Right ventricle myocardium inferior (tissue), 1 donor: ENCODE measurements at regions of chr3 and their contacts with region 1.

Region 1: GRCh38 chr3:64612082-64612860 is 75.5 kb downstream of the ADAMTS9 start:
- DNase-seq: no peak
- ATAC-seq: peak; percentile 97

Region 2: DNA sequence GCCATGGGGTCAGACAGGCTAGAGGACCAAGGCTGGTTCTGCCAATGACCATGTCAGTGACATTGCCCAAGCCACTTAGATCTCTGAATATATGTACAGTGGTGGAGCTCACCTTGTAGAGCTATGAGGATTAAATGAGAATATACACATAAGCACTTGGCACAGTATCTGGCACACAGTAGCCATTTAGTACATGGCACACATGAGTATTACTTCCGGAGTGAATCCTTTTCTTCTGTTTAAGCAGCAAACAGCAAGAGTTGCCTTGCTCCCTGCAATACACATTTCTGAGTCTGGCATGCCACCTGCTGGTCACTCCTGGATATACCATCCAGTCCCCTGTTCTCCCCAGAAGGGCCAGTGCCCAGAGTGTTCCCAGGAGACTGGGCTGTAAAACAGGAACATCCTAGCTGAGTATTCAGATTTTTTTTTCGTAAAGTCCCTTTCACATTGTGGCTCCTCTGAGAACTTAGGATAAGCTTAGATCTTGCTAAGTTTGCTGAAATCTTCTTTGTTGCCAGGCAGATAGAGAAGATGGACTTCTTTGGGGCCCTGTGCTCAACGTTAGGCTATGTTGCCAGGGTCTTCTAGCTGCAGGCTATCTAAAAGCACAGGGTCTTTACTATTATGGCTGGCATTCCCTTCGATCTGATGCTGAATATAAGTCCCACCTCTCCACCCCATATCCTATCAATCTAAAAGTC is 127.8 kb before region 1 on chr3:
- intact Hi-C with region 1: no loop called
- DNase-seq: no peak
- ATAC-seq: peak; percentile 94

Region 3: GRCh38 chr3:64539451-64540196 is 72.6 kb before region 1 on chr3:
- intact Hi-C with region 1: loop called (anchors 5 kb)
- DNase-seq: no peak
- ATAC-seq: peak; percentile 87

Region 4: DNA sequence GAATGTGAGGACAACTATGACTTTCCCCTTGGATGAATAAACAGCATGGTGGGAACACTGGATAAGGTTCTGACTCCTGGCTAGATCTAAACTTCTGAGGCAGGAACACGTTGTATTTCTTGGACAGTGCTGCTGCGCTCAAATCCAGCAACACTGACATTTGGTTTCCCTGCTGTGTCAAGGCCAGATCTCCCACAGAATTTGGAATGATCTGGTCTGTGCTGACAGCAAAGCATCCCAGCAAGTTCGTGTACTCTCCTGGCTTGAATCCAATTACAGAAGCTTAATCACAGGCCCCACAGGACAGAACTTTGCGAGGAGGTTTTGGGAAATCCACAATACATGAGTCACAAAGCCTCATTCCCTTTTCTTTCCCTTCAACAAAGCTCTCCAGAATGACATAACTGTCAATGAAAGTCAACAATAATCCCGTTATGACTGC is 17.0 kb before region 1 on chr3:
- intact Hi-C with region 1: loop called (anchors 2 kb)
- DNase-seq: peak; percentile 53
- ATAC-seq: peak; percentile 97

Region 5: GRCh38 chr3:64666171-64666588 is 53.9 kb after region 1 on chr3:
- intact Hi-C with region 1: no loop called
- DNase-seq: no peak
- ATAC-seq: no peak